Mammary epithelial cell (primary cell): ENCODE measurements at regions of chr20 and their contacts with region 1.

Region 1: GRCh38 chr20:50320910-50321796 is 130.5 kb downstream of the CEBPB start:
- DNase-seq: peak; percentile 99
- H3K4me3 ChIP-seq: peak overlapping the region; percentile 15 to 49 (median 49)
- H3K27ac ChIP-seq: peak overlapping the region; percentile 90
- H3K4me1 ChIP-seq: peaks cover 48% of the 10 kb centered on the region
- H3K27me3 ChIP-seq: no peaks in the 10 kb centered on the region
- CTCF ChIP-seq: peak in 1 of 2 donors; percentile 11

Region 2: GRCh38 chr20:50333856-50334255 is 12.7 kb after region 1 on chr20:
- CTCF ChIA-PET with region 1: no interaction called
- dilution Hi-C with region 1: no loop called
- in situ Hi-C with region 1: no loop called
- intact Hi-C with region 1: loop called (anchors 1 kb)
- DNase-seq: peak; percentile 95
- H3K4me3 ChIP-seq: no peak overlapping the region
- H3K27ac ChIP-seq: peak overlapping the region; percentile 95
- H3K4me1 ChIP-seq: peaks cover 60% of the 10 kb centered on the region
- H3K27me3 ChIP-seq: no peaks in the 10 kb centered on the region
- CTCF ChIP-seq: no peak

Region 3: DNA sequence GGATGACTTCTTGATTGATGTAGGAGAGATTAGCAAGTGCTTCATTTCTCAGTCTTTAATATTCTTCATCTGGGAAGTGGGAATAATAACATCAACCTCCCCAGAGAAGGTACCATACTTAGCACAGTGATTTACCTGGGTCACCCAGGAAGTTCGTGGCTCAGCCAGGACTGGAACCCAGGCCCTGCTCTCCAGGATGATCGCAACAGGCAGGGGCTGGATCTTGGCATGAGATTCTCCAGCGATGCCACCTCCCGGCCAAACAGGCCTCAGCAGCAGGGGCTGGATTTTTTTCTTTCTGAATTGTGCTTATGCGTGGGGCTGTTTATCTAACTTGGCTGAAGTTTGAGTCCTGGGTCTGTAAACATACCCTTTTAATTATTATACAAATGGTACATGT is 59.5 kb after region 1 on chr20:
- CTCF ChIA-PET with region 1: no interaction called
- dilution Hi-C with region 1: loop called (anchors 5 kb)
- in situ Hi-C with region 1: no loop called
- intact Hi-C with region 1: no loop called
- DNase-seq: peak; percentile 28
- H3K4me3 ChIP-seq: no peak overlapping the region
- H3K27ac ChIP-seq: no peak overlapping the region
- H3K4me1 ChIP-seq: peaks cover 18% of the 10 kb centered on the region
- H3K27me3 ChIP-seq: no peaks in the 10 kb centered on the region
- CTCF ChIP-seq: peak; percentile 50 to 75

Region 4: DNA sequence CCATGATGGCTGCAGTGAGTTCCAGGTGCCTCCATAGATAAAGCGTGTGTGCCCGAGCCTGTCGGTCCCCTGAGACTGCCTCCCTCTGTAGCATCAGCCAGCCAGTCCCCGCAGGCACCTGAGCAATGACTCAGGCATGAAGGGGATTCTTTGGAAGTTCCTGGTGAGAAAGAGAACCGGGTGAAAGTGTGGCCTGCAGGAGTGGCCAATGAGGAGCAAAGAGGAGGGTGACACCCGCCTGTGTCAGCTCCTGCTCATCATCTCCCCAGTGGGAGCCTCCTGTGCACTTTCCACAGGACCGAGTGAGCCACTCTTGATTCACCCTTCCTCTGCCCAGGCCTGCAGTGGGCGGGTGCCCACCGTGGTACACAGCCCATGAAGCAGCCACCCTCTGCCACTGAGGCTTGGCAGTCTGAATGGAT is 117.8 kb after region 1 on chr20:
- CTCF ChIA-PET with region 1: no interaction called
- dilution Hi-C with region 1: no loop called
- in situ Hi-C with region 1: no loop called
- intact Hi-C with region 1: loop called (anchors 5 kb)
- DNase-seq: peak; percentile 100
- H3K4me3 ChIP-seq: no peak overlapping the region
- H3K27ac ChIP-seq: peak overlapping the region; percentile 89
- H3K4me1 ChIP-seq: peaks cover 38% of the 10 kb centered on the region
- H3K27me3 ChIP-seq: no peaks in the 10 kb centered on the region
- CTCF ChIP-seq: no peak